ENCODE measurements at regions of chrX and their contacts with region 1.

Region 1: DNA sequence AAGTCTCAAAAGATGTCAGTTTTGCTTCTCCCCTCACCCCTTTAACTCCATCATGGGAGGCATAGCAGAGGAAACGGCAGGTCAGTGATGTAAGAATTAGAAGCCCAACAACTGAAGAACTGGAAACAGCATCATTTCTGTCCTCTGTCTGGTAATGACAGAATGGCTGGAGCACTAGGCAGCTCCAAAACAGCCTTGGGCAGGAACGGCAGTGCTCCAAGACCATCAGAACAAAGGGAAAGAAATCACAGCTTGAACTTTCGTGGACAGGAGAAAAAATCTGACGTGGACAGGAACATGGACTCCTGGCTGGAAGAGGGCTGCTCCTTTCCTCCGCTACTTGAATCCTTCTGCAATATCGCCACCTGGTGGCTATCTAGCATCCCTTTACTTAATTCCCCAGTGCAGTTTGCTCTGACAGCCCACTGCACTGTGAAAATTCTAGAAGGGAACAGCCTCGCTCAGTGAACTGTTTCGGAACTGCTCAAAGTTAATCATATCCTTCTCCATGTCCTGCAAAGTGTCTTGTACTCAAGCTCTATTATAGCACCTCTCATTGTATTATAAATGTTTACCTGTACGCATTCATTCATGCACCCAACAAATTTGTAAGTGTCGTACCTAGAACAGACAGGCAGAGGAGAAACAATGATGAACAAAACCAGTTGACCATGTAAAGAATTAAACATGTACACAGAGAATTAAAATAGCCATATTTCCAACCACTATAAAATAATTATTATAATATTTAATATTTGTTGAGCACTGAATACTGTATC is 20.4 kb downstream of the SLC25A53 start:
- DNase-seq: peak; percentile 53 to 64 (median 63)
- H3K4me3 ChIP-seq: no peak overlapping the region
- H3K4me3 Mint-ChIP-seq: peak overlapping the region; percentile 51 to 75
- H3K27ac ChIP-seq: no peak overlapping the region
- H3K27ac Mint-ChIP-seq: no peak overlapping the region
- H3K4me1 ChIP-seq: peaks cover 0 to 3% of the 10 kb centered on the region in 2 donors
- H3K4me1 Mint-ChIP-seq: peaks cover 14% of the 10 kb centered on the region
- H3K27me3 ChIP-seq: peaks cover 0 to 2% of the 10 kb centered on the region in 2 donors
- H3K27me3 Mint-ChIP-seq: peaks cover 0 to 9% (median 0%) of the 10 kb centered on the region in 3 donors
- CTCF ChIP-seq: peak; percentile 71

Region 2: GRCh38 chrX:102720237-102721168 is 1415.9 kb before region 1 on chrX and contains the start of gene GPRASP3:
- intact Hi-C with region 1: no loop called
- DNase-seq: peak; percentile 28 to 51 (median 41)
- H3K4me3 ChIP-seq: peak within 1 kb of the TSS; percentile 16 to 65 (median 21)
- H3K4me3 Mint-ChIP-seq: peak within 1 kb of the TSS; percentile 80 to 96
- H3K27ac ChIP-seq: no peak within 1 kb of the TSS
- H3K27ac Mint-ChIP-seq: peak within 1 kb of the TSS in 1 of 7 donors; percentile 57
- H3K4me1 ChIP-seq: peaks cover 9 to 10% of the 10 kb centered on the region in 2 donors
- H3K4me1 Mint-ChIP-seq: peaks cover 12% of the 10 kb centered on the region
- H3K27me3 ChIP-seq: no peaks in the 10 kb centered on the region
- H3K27me3 Mint-ChIP-seq: peaks cover 1 to 15% (median 2%) of the 10 kb centered on the region in 3 donors
- CTCF ChIP-seq: no peak
- polyA plus RNA-seq, gene GPRASP3: 0.03 to 0.08 (median 0.04) TPM

Region 3: GRCh38 chrX:103845165-103845653 is 291.2 kb before region 1 on chrX:
- intact Hi-C with region 1: loop called in 1 of 2 experiments (anchors 10 kb)
- DNase-seq: peak in 2 of 3 donors; percentile 11 to 20
- H3K4me3 ChIP-seq: no peak overlapping the region
- H3K4me3 Mint-ChIP-seq: no peak overlapping the region
- H3K27ac ChIP-seq: no peak overlapping the region
- H3K27ac Mint-ChIP-seq: no peak overlapping the region
- H3K4me1 ChIP-seq: no peaks in the 10 kb centered on the region
- H3K4me1 Mint-ChIP-seq: no peaks in the 10 kb centered on the region
- H3K27me3 ChIP-seq: peaks cover 0 to 6% of the 10 kb centered on the region in 2 donors
- H3K27me3 Mint-ChIP-seq: peaks cover 0 to 6% (median 0%) of the 10 kb centered on the region in 3 donors
- CTCF ChIP-seq: peak; percentile 58

Region 4: GRCh38 chrX:104098151-104098808 is 38.1 kb before region 1 on chrX:
- intact Hi-C with region 1: loop called in 1 of 2 experiments (anchors 2 kb)
- DNase-seq: peak; percentile 47 to 78 (median 52)
- H3K4me3 ChIP-seq: no peak overlapping the region
- H3K4me3 Mint-ChIP-seq: no peak overlapping the region
- H3K27ac ChIP-seq: no peak overlapping the region
- H3K27ac Mint-ChIP-seq: no peak overlapping the region
- H3K4me1 ChIP-seq: no peaks in the 10 kb centered on the region
- H3K4me1 Mint-ChIP-seq: no peaks in the 10 kb centered on the region
- H3K27me3 ChIP-seq: no peaks in the 10 kb centered on the region
- H3K27me3 Mint-ChIP-seq: peaks cover 0 to 12% (median 8%) of the 10 kb centered on the region in 3 donors
- CTCF ChIP-seq: peak; percentile 34

Measured in CD14-positive monocyte (primary cell).